CD8-positive, alpha-beta T cell (primary cell): ENCODE measurements at regions of chr6 and their contacts with region 1.

Region 1: GRCh38 chr6:38671885-38672467 is 31.0 kb downstream of the GLO1 start:
- DNase-seq: peak in 4 of 9 experiments; percentile 24 to 70 (median 43)
- ATAC-seq: peak; percentile 74
- H3K4me3 ChIP-seq: no peak overlapping the region
- H3K4me3 Mint-ChIP-seq: no peak overlapping the region
- H3K27ac ChIP-seq: no peak overlapping the region
- H3K27ac Mint-ChIP-seq: no peak overlapping the region
- H3K4me1 ChIP-seq: peaks cover 6% of the 10 kb centered on the region
- H3K4me1 Mint-ChIP-seq: peaks cover 6% of the 10 kb centered on the region
- H3K27me3 ChIP-seq: no peaks in the 10 kb centered on the region
- H3K27me3 Mint-ChIP-seq: no peaks in the 10 kb centered on the region
- CTCF ChIP-seq: peak; percentile 75

Region 2: DNA sequence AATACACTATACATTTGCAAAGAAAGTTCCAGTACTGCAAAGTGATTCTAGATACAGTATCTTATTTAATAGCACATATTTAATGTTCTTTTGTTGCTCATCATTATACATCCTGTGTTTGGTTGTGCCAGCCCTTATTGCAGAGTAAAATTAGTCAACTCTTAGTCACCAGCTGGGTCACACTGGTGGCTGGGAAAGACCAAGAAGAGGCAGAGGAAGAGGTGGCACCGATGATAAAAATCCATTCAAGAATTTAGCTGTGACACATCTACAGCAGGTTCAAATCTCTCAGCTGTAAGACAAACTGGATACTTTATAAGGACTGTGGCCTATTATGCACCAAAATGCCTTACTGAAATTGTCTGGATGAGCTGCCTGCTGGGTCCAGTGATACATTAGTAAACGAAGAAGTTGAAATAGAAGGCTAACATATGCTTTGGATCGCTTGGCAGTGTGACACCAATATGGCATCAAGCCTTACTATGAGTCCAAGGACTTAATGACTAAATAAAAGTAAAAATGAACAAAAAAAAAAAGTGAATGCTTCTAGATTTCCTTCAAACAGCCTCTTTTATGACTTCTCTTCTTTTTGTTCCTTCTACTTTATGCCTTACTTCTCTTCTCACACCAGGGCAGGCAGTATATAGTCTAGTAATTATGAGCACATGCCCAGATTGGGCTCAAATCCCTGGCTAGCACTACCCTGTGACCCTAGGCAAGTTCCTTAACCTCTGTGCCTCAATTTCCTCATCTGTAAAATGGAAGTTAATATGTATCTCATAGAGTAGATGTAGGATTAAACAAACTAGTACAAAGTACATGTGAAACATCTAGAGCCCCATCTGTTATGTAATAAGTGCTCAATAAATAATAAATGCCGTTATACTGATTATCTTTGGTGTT is 1347.6 kb before region 1 on chr6:
- CTCF ChIA-PET with region 1: no interaction called
- POLR2A ChIA-PET with region 1: no interaction called
- intact Hi-C with region 1: loop called in 1 of 2 experiments (anchors 10 kb)
- DNase-seq: no peak
- ATAC-seq: no peak
- H3K4me3 ChIP-seq: no peak overlapping the region
- H3K4me3 Mint-ChIP-seq: no peak overlapping the region
- H3K27ac ChIP-seq: no peak overlapping the region
- H3K27ac Mint-ChIP-seq: no peak overlapping the region
- H3K4me1 ChIP-seq: no peaks in the 10 kb centered on the region
- H3K4me1 Mint-ChIP-seq: no peaks in the 10 kb centered on the region
- H3K27me3 ChIP-seq: no peaks in the 10 kb centered on the region
- H3K27me3 Mint-ChIP-seq: no peaks in the 10 kb centered on the region
- CTCF ChIP-seq: no peak

Region 3: GRCh38 chr6:37791156-37791919 is 880.6 kb before region 1 on chr6:
- CTCF ChIA-PET with region 1: interaction called, 4 read pairs
- POLR2A ChIA-PET with region 1: no interaction called
- intact Hi-C with region 1: loop called in 1 of 2 experiments (anchors 5 kb)
- DNase-seq: peak; percentile 44 to 84 (median 80)
- ATAC-seq: peak; percentile 99
- H3K4me3 ChIP-seq: no peak overlapping the region
- H3K4me3 Mint-ChIP-seq: no peak overlapping the region
- H3K27ac ChIP-seq: no peak overlapping the region
- H3K27ac Mint-ChIP-seq: no peak overlapping the region
- H3K4me1 ChIP-seq: peaks cover 7% of the 10 kb centered on the region
- H3K4me1 Mint-ChIP-seq: peaks cover 3% of the 10 kb centered on the region
- H3K27me3 ChIP-seq: no peaks in the 10 kb centered on the region
- H3K27me3 Mint-ChIP-seq: no peaks in the 10 kb centered on the region
- CTCF ChIP-seq: peak; percentile 66

Region 4: GRCh38 chr6:38034274-38034914 is 637.6 kb before region 1 on chr6:
- CTCF ChIA-PET with region 1: interaction called, 3 read pairs
- POLR2A ChIA-PET with region 1: no interaction called
- intact Hi-C with region 1: loop called in 1 of 2 experiments (anchors 10 kb)
- DNase-seq: peak in 2 of 9 experiments; percentile 20 to 31
- ATAC-seq: no peak
- H3K4me3 ChIP-seq: no peak overlapping the region
- H3K4me3 Mint-ChIP-seq: no peak overlapping the region
- H3K27ac ChIP-seq: no peak overlapping the region
- H3K27ac Mint-ChIP-seq: no peak overlapping the region
- H3K4me1 ChIP-seq: peaks cover 23% of the 10 kb centered on the region
- H3K4me1 Mint-ChIP-seq: peaks cover 69% of the 10 kb centered on the region
- H3K27me3 ChIP-seq: no peaks in the 10 kb centered on the region
- H3K27me3 Mint-ChIP-seq: no peaks in the 10 kb centered on the region
- CTCF ChIP-seq: peak; percentile 37

Region 5: GRCh38 chr6:38720295-38720694 is 48.3 kb after region 1 on chr6:
- CTCF ChIA-PET with region 1: no interaction called
- POLR2A ChIA-PET with region 1: no interaction called
- intact Hi-C with region 1: no loop called
- DNase-seq: no peak
- ATAC-seq: no peak
- H3K4me3 ChIP-seq: no peak overlapping the region
- H3K4me3 Mint-ChIP-seq: no peak overlapping the region
- H3K27ac ChIP-seq: no peak overlapping the region
- H3K27ac Mint-ChIP-seq: no peak overlapping the region
- H3K4me1 ChIP-seq: peaks cover 2% of the 10 kb centered on the region
- H3K4me1 Mint-ChIP-seq: peaks cover 5% of the 10 kb centered on the region
- H3K27me3 ChIP-seq: peaks cover 0 to 2% of the 10 kb centered on the region in 2 experiments
- H3K27me3 Mint-ChIP-seq: peaks cover 43% of the 10 kb centered on the region
- CTCF ChIP-seq: no peak